Activated B cell treated with CpG ODN at 0.5 μM for 24 hours (primary cell): ENCODE measurements at regions of chr1 and their contacts with region 1.

Region 1: GRCh38 chr1:66253330-66253921 is 280.5 kb upstream of the SGIP1 start:
- DNase-seq: no peak
- ATAC-seq: peak; percentile 95
- H3K4me3 Mint-ChIP-seq: no peak overlapping the region
- H3K27ac Mint-ChIP-seq: peak overlapping the region; percentile 82
- H3K4me1 Mint-ChIP-seq: peaks cover 28% of the 10 kb centered on the region
- H3K27me3 Mint-ChIP-seq: no peaks in the 10 kb centered on the region
- CTCF ChIP-seq: peak; percentile 34

Region 2: GRCh38 chr1:65958561-65959350 is 294.7 kb before region 1 on chr1:
- CTCF ChIA-PET with region 1: interaction called, 17 read pairs
- POLR2A ChIA-PET with region 1: no interaction called
- intact Hi-C with region 1: loop called (anchors 2 kb)
- DNase-seq: no peak
- ATAC-seq: peak; percentile 40
- H3K4me3 Mint-ChIP-seq: no peak overlapping the region
- H3K27ac Mint-ChIP-seq: no peak overlapping the region
- H3K4me1 Mint-ChIP-seq: peaks cover 4% of the 10 kb centered on the region
- H3K27me3 Mint-ChIP-seq: no peaks in the 10 kb centered on the region
- CTCF ChIP-seq: peak; percentile 44

Region 3: DNA sequence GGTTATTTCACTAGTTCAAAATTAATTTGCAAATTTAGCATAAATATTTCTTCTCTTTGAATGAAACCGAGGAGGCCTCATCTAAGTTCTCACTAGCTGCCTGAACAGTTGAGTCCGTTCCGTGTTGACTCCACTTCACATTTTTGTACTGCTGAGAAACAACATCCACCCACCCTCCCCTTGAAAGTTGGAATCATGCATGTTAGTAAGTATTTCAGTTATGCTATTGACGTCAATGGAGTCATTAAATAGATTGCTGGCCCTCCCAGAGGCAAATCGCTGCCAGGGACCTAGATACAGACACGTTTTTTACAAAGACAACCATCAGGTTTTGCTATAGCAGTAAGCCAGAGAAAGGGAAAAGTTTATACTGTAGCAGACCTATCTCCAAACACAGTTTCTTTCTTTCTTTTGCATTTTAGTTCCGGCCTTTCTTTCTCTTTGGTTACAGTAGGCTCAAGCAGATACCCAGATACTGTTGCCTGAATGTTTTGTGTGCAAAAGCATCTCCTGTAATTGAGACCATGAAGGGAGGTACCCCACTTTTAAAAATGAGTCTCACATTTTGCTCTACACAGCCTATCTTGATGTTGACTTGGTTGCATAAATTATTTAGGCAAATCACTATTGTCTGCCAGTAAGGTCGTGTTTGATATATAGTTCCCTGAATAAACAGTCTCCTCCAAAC is 17.9 kb after region 1 on chr1:
- CTCF ChIA-PET with region 1: interaction called, 3 read pairs
- POLR2A ChIA-PET with region 1: interaction called, 10 read pairs
- intact Hi-C with region 1: loop called (anchors 1 kb)
- DNase-seq: no peak
- ATAC-seq: peak; percentile 78
- H3K4me3 Mint-ChIP-seq: peak overlapping the region; percentile 57
- H3K27ac Mint-ChIP-seq: peak overlapping the region; percentile 81
- H3K4me1 Mint-ChIP-seq: peaks cover 51% of the 10 kb centered on the region
- H3K27me3 Mint-ChIP-seq: no peaks in the 10 kb centered on the region
- CTCF ChIP-seq: no peak

Region 4: GRCh38 chr1:66374561-66375111 is 121.2 kb after region 1 on chr1:
- CTCF ChIA-PET with region 1: interaction called, 6 read pairs
- POLR2A ChIA-PET with region 1: interaction called, 6 read pairs
- intact Hi-C with region 1: loop called (anchors 1 kb)
- DNase-seq: no peak
- ATAC-seq: peak; percentile 79
- H3K4me3 Mint-ChIP-seq: peak overlapping the region; percentile 39
- H3K27ac Mint-ChIP-seq: peak overlapping the region; percentile 93
- H3K4me1 Mint-ChIP-seq: peaks cover 94% of the 10 kb centered on the region
- H3K27me3 Mint-ChIP-seq: no peaks in the 10 kb centered on the region
- CTCF ChIP-seq: no peak

Region 5: GRCh38 chr1:66436378-66437145 is 183.1 kb after region 1 on chr1:
- CTCF ChIA-PET with region 1: interaction called, 437 read pairs
- POLR2A ChIA-PET with region 1: no interaction called
- intact Hi-C with region 1: no loop called
- DNase-seq: no peak
- ATAC-seq: peak; percentile 65
- H3K4me3 Mint-ChIP-seq: no peak overlapping the region
- H3K27ac Mint-ChIP-seq: peak overlapping the region; percentile 63
- H3K4me1 Mint-ChIP-seq: peaks cover 38% of the 10 kb centered on the region
- H3K27me3 Mint-ChIP-seq: no peaks in the 10 kb centered on the region
- CTCF ChIP-seq: no peak